ENCODE measurements at regions of chr3 and their contacts with region 1.

Region 1: GRCh38 chr3:50542177-50543034 is 25.1 kb downstream of the C3orf18 start:
- DNase-seq: peak; percentile 84 to 91
- H3K4me3 ChIP-seq: no peak overlapping the region
- H3K27ac ChIP-seq: no peak overlapping the region
- H3K4me1 ChIP-seq: no peaks in the 10 kb centered on the region
- H3K27me3 ChIP-seq: peaks cover 0 to 16% (median 0%) of the 10 kb centered on the region in 3 donors
- CTCF ChIP-seq: peak in 6 of 7 experiments; percentile 39 to 92 (median 86)
- EP300 ChIP-seq: no peak
- POLR2A ChIP-seq: no peak

Region 2: DNA sequence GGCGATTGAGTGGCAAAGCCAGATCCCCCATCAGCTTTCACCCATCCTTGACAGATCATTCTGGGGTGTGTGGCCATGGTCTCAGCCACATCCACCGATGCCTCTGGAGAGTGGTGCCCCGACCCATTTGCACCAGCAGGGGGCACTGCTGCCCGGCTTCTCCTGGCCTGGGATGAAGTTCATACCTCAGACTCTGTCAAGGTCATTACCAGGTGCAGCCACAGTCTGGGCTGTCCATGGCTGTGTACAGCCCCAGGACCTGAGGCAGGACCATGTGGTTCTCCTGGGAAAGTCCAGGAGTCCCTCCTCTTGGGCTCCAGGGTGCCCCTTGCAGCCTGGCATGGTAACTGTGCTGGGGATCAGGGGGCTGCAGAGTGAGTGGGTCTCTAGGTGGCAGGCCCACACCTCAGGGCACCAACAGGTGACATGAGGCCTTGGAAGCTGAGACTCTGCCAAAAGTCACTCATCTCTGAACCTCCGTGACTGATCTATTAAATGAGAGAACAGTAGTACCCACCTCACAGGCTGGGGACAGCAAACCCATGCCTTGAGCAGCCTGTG is 106.2 kb before region 1 on chr3:
- intact Hi-C with region 1: loop called (anchors 5 kb)
- DNase-seq: peak; percentile 90
- H3K4me3 ChIP-seq: no peak overlapping the region
- H3K27ac ChIP-seq: no peak overlapping the region
- H3K4me1 ChIP-seq: peaks cover 3 to 15% (median 8%) of the 10 kb centered on the region in 4 donors
- H3K27me3 ChIP-seq: no peaks in the 10 kb centered on the region
- CTCF ChIP-seq: peak in 5 of 7 experiments; percentile 79 to 95 (median 92)
- EP300 ChIP-seq: no peak
- POLR2A ChIP-seq: no peak

Measured in stomach (tissue), 19 donors.